Heart left ventricle (tissue), 16 donors: ENCODE measurements at regions of chr18 and their contacts with region 1.

Region 1: DNA sequence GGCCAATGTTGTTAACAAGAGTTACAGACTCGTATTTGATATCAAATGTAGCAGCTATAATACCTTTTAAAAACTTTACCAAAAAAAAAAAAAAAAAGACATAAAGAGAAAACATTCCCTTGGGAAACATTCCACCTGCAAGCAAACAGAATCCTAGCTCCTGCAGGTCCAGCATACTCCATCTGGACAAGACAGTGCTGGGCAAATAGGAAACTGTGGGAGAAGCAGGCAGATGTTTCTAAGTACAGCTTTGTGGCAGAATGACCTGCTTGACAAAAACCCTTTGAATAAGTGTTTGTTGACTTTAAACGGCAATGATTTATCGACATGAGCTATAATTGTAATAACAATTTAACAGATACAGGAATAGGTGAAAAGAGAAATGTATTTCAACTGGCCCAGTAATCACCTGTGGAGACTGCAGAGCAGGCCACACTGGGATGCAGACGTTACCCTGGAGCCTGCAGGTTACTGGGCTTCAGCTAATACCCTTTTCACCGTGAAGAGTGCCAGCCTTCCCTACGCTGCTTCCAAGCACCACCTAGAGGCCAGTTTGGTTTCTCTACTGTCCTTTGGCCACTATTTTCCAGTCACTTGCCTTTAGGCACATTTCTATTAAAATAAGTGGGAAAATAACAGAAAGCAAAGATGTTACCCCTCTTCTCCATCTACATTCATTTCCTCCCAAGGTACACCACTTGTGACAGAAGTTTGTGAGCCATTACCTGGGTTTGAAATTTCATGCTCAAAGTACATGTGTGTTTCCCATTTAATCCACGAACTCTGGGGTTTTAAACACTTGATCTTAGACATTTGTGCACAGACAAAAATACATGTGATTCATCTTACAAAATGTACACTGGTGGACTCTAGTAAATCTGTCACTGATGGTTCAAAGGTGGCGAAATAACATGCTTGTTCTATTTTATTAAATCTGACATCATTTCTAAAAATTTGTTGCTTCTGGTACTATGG is 96.9 kb upstream of the ZNF397 start:
- DNase-seq: peak in 4 of 5 donors; percentile 42 to 56 (median 54)
- ATAC-seq: peak; percentile 76 to 94 (median 92)
- H3K4me3 ChIP-seq: no peak overlapping the region
- H3K27ac ChIP-seq: peak overlapping the region in 1 of 12 donors; percentile 15
- H3K4me1 ChIP-seq: peaks cover 0 to 13% (median 0%) of the 10 kb centered on the region in 12 donors
- H3K27me3 ChIP-seq: no peaks in the 10 kb centered on the region
- CTCF ChIP-seq: peak; percentile 58 to 85 (median 77)
- POLR2A ChIP-seq: no peak

Region 2: GRCh38 chr18:34867520-34867919 is 276.4 kb before region 1 on chr18:
- intact Hi-C with region 1: loop called in 2 of 10 experiments (anchors 10 kb)
- DNase-seq: peak in 3 of 5 donors; percentile 31 to 43 (median 32)
- ATAC-seq: peak in 3 of 4 donors; percentile 40 to 84 (median 60)
- H3K4me3 ChIP-seq: no peak overlapping the region
- H3K27ac ChIP-seq: peak overlapping the region in 9 of 12 donors; percentile 20 to 66 (median 42)
- H3K4me1 ChIP-seq: peaks cover 0 to 24% (median 2%) of the 10 kb centered on the region in 12 donors
- H3K27me3 ChIP-seq: no peaks in the 10 kb centered on the region
- CTCF ChIP-seq: peak in 8 of 12 donors; percentile 9 to 48 (median 25)
- POLR2A ChIP-seq: no peak

Region 3: DNA sequence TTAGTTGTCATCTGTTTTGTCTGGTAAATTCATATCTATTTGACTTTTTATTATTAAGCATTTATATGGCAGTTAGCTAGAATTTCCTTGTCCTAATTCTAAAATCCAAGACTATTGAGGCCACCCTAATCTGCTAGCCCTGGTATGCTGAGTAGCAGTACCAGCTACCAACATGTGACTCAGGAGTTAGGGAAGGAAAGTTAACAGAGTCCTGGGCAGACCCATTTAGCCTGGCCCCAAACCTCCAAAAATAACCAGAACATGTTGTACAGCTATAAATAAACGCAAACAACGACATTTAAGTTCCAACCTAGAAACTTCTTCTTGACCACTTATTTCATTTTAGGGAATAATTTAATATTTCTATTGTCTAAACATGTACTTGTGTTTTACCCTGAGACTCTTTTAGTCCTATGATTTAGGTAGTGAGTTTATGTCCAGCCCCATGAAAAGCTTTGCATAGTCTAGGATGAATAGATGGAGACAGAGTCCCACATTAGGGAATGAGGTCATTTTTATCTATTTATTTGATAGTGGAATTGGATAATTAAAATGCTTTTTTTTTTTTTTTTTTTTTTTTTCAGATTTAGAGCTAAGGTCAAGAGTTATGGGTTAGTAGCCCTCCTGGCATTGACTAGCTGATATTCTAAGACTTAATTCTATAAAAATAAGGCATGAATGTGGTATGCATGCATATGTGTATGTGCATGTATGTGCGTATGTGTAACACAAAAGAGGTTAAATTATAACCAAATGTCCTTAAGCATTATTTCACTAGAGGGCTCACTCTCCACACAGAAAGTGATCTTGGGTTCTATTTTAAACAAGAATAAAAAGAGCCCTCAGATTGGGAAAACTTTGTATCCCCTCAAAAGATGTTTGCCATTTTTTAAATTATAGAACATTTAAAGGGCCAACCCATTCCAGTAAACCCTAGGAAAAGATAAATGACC is 262.8 kb before region 1 on chr18:
- intact Hi-C with region 1: loop called in 5 of 10 experiments (anchors 5 to 10 kb)
- DNase-seq: no peak
- ATAC-seq: peak; percentile 87 to 95 (median 90)
- H3K4me3 ChIP-seq: no peak overlapping the region
- H3K27ac ChIP-seq: peak overlapping the region; percentile 33 to 88 (median 70)
- H3K4me1 ChIP-seq: peaks cover 0 to 26% (median 10%) of the 10 kb centered on the region in 12 donors
- H3K27me3 ChIP-seq: no peaks in the 10 kb centered on the region
- CTCF ChIP-seq: peak in 9 of 12 donors; percentile 12 to 47 (median 27)
- POLR2A ChIP-seq: no peak

Region 4: GRCh38 chr18:35005963-35006577 is 137.8 kb before region 1 on chr18:
- intact Hi-C with region 1: loop called (anchors 1 to 5 kb)
- DNase-seq: no peak
- ATAC-seq: peak; percentile 67 to 88 (median 86)
- H3K4me3 ChIP-seq: no peak overlapping the region
- H3K27ac ChIP-seq: no peak overlapping the region
- H3K4me1 ChIP-seq: peaks cover 0 to 7% (median 0%) of the 10 kb centered on the region in 12 donors
- H3K27me3 ChIP-seq: no peaks in the 10 kb centered on the region
- CTCF ChIP-seq: peak; percentile 52 to 81 (median 72)
- POLR2A ChIP-seq: no peak

Region 5: GRCh38 chr18:35029770-35030169 is 114.1 kb before region 1 on chr18:
- intact Hi-C with region 1: loop called in 8 of 10 experiments (anchors 5 to 10 kb)
- DNase-seq: no peak
- ATAC-seq: peak in 1 of 4 donors; percentile 56
- H3K4me3 ChIP-seq: peak overlapping the region in 10 of 12 donors; percentile 11 to 50 (median 34)
- H3K27ac ChIP-seq: peak overlapping the region in 10 of 12 donors; percentile 19 to 86 (median 32)
- H3K4me1 ChIP-seq: peaks cover 0 to 38% (median 30%) of the 10 kb centered on the region in 12 donors
- H3K27me3 ChIP-seq: no peaks in the 10 kb centered on the region
- CTCF ChIP-seq: peak in 2 of 12 donors; percentile 7 to 10
- POLR2A ChIP-seq: no peak

Region 6: GRCh38 chr18:35040988-35041814 is 102.7 kb before region 1 on chr18 and contains the start of gene MAPRE2:
- intact Hi-C with region 1: loop called in 6 of 10 experiments (anchors 5 to 10 kb)
- DNase-seq: peak; percentile 99 to 100 (median 99)
- ATAC-seq: peak; percentile 93 to 97 (median 96)
- H3K4me3 ChIP-seq: peak within 1 kb of the TSS; percentile 66 to 96 (median 92)
- H3K27ac ChIP-seq: peak within 1 kb of the TSS; percentile 75 to 95 (median 89)
- H3K4me1 ChIP-seq: peaks cover 0 to 77% (median 37%) of the 10 kb centered on the region in 12 donors
- H3K27me3 ChIP-seq: no peaks in the 10 kb centered on the region
- CTCF ChIP-seq: peak in 2 of 12 donors; percentile 9 to 10
- POLR2A ChIP-seq: peak; percentile 92 to 98
- total RNA-seq, gene MAPRE2: 80.2 to 190 (median 137) TPM

Region 7: DNA sequence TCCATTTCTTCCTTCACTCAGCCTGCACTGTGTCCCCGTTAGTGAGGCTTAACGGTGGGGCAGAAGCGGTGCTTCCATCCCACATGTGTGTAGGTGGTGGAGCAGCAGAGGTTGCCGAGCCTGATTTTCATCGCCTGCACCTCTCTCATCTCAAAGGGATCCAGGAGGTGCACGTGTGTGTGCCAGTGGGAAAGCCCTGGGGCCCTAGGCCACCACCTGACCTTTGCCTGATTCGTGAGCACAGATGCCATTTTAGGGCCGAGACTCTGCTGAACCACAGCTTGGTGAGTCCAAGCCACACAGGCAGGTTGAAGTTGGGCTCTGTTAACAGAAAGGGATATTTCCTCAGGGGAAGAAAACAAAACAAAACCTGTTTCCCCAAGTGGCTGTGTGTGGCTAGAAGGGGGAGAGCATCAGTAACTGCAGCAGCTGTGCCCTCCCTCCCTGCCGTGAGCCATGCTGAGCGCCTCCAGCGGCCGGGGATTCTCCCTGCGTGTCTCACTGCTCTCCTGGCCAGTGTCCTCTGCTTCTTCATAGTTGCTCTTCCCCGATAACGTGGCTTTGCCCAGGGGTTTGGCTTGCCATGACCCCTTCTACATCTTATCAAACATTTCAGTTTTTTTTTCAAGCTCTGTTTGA is 21.2 kb before region 1 on chr18:
- intact Hi-C with region 1: loop called in 1 of 10 experiments (anchors 2 kb)
- DNase-seq: peak in 3 of 5 donors; percentile 31 to 68 (median 51)
- ATAC-seq: peak in 3 of 4 donors; percentile 64 to 66 (median 66)
- H3K4me3 ChIP-seq: no peak overlapping the region
- H3K27ac ChIP-seq: peak overlapping the region in 6 of 12 donors; percentile 1 to 35 (median 12)
- H3K4me1 ChIP-seq: peaks cover 3 to 77% (median 47%) of the 10 kb centered on the region in 12 donors
- H3K27me3 ChIP-seq: no peaks in the 10 kb centered on the region
- CTCF ChIP-seq: peak in 8 of 12 donors; percentile 11 to 52 (median 30)
- POLR2A ChIP-seq: no peak